Lower leg skin (tissue), 4 donors: ENCODE measurements at regions of chr20 and their contacts with region 1.

Region 1: DNA sequence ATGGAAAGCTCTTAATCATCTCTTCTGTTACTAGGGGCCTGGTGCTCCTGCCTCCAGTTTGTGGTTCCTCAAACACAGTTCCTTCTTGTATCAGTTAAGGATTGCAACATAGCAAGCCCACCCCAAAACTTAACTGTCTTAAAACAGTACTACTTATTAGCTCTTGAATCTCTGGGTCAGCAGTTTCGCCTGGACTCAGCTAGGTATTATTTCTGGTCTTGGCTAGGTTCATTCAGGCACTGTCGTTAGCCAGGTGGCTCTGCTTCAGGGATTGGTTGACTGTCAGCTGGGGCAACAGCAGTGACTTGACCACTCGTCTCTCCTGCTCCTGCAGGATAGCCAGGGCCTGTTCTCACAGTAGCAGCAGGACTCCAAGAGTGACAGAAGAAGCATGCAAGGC is 30.0 kb upstream of the RALY start:
- DNase-seq: peak in 1 of 2 donors; percentile 64
- H3K4me3 ChIP-seq: no peak overlapping the region
- CTCF ChIP-seq: no peak
- POLR2A ChIP-seq: no peak

Region 2: DNA sequence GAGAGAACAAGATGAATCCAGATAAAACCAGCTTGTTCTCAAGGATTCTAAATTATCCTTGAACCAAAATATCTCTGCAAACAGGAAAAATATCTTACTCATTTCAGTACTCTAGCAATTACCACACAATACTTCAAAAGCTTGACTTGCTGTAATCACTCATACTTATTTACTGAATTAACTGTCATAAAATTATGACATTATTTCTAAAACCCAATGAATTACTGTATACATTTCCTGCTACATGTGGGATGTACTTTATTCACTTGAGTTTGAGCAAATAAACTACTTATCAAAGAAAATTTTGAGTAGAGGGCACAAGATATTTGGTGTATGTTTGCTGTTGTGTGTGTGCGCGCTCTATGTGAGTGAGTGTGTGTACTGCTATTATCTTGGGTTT is 138.6 kb after region 1 on chr20:
- intact Hi-C with region 1: no loop called
- DNase-seq: no peak
- H3K4me3 ChIP-seq: no peak overlapping the region
- CTCF ChIP-seq: no peak
- POLR2A ChIP-seq: no peak

Region 3: DNA sequence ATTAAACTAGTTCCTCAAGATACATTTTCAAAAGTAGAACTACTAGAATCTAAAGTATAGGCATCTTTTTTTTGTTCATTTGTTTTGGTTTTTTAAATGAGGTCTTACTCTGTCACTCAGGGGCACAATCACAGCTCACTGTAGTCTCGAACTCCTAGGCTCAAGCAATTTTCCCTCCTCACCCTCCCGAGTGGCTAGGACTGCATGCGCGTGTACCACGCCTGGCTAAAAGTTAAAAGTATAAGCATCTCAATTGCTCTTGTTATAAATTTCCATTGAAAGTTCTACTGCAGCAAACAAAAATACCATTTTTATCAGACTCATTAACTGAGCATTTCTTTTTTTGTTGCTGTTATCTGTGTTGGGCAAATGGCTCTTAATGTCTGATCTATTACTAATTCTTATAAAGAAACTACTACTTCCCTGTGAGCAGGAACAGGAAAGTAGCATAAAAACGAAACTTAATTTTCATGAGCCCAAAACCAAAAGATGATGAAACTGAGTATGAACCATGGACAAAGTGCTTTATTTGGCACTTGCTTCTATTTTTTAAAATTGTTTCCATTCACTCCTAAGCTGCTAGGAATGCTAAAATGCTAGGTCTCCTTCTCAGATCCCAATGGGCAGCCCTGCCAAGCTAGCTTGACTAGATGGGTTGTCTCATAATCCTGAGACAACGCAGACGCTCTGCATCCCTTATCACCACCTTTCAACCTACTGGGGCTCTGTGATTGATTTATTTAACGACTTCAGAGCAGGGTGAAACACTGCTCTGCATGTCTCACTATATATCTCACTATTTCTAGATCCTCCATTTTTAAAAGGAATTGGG is 1091.9 kb after region 1 on chr20:
- intact Hi-C with region 1: loop called (anchors 10 kb)
- DNase-seq: no peak
- H3K4me3 ChIP-seq: no peak overlapping the region
- CTCF ChIP-seq: no peak
- POLR2A ChIP-seq: no peak